CD4-positive, alpha-beta memory T cell (primary cell): ENCODE measurements at regions of chr17 and their contacts with region 1.

Region 1: GRCh38 chr17:75784473-75785015 is at the start of gene UNK:
- DNase-seq: peak; percentile 97 to 98 (median 98)
- H3K4me3 ChIP-seq: peak within 1 kb of the TSS; percentile 66 to 83
- H3K4me3 Mint-ChIP-seq: peak within 1 kb of the TSS; percentile 88 to 97 (median 94)
- H3K27ac ChIP-seq: peak within 1 kb of the TSS; percentile 100
- H3K27ac Mint-ChIP-seq: peak within 1 kb of the TSS; percentile 95 to 100 (median 99)
- H3K4me1 ChIP-seq: peaks cover 51% of the 10 kb centered on the region
- H3K4me1 Mint-ChIP-seq: peaks cover 26 to 53% (median 42%) of the 10 kb centered on the region in 4 donors
- H3K27me3 ChIP-seq: no peaks in the 10 kb centered on the region
- H3K27me3 Mint-ChIP-seq: peaks cover under 1 to 2% of the 10 kb centered on the region in 2 donors
- total RNA-seq, gene UNK: 45.8 to 48.1 TPM

Region 2: GRCh38 chr17:75795820-75796607 is 11.5 kb after region 1 on chr17:
- CTCF ChIA-PET with region 1: interaction called, 8 read pairs
- POLR2A ChIA-PET with region 1: interaction called, 16 read pairs
- intact Hi-C with region 1: no loop called
- DNase-seq: no peak
- H3K4me3 ChIP-seq: no peak overlapping the region
- H3K4me3 Mint-ChIP-seq: no peak overlapping the region
- H3K27ac ChIP-seq: no peak overlapping the region
- H3K27ac Mint-ChIP-seq: peak overlapping the region in 2 of 7 donors; percentile 10 to 80
- H3K4me1 ChIP-seq: peaks cover 10% of the 10 kb centered on the region
- H3K4me1 Mint-ChIP-seq: peaks cover 9 to 22% (median 19%) of the 10 kb centered on the region in 4 donors
- H3K27me3 ChIP-seq: no peaks in the 10 kb centered on the region
- H3K27me3 Mint-ChIP-seq: no peaks in the 10 kb centered on the region

Region 3: DNA sequence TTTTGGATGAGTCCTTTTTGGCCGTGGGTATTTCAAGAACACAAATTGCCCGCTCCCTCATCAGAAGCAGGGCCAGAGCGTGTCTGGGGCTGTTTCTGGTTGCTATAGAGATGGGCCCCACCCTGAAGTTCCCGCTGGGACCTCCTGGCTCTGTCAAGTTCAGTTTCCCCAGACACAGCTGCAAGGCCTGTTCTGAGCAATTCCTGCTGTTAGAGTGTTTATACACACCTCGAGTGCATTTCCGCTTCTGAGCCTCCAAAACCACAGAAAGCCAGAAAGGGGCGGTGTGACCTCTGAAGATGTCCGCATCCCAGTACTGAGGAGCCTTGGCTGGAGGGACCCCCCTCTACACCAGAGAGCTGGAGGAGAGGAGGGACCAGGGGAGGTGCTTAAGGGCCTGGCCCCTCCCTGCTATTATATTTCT is 79.9 kb after region 1 on chr17:
- CTCF ChIA-PET with region 1: interaction called, 4 read pairs
- POLR2A ChIA-PET with region 1: interaction called, 10 read pairs
- intact Hi-C with region 1: no loop called
- DNase-seq: peak; percentile 44 to 82 (median 50)
- H3K4me3 ChIP-seq: no peak overlapping the region
- H3K4me3 Mint-ChIP-seq: peak overlapping the region in 7 of 8 donors; percentile 54 to 84 (median 67)
- H3K27ac ChIP-seq: peak overlapping the region; percentile 60
- H3K27ac Mint-ChIP-seq: peak overlapping the region; percentile 90 to 94 (median 93)
- H3K4me1 ChIP-seq: peaks cover 23% of the 10 kb centered on the region
- H3K4me1 Mint-ChIP-seq: peaks cover 15 to 34% (median 25%) of the 10 kb centered on the region in 4 donors
- H3K27me3 ChIP-seq: no peaks in the 10 kb centered on the region
- H3K27me3 Mint-ChIP-seq: no peaks in the 10 kb centered on the region

Region 4: DNA sequence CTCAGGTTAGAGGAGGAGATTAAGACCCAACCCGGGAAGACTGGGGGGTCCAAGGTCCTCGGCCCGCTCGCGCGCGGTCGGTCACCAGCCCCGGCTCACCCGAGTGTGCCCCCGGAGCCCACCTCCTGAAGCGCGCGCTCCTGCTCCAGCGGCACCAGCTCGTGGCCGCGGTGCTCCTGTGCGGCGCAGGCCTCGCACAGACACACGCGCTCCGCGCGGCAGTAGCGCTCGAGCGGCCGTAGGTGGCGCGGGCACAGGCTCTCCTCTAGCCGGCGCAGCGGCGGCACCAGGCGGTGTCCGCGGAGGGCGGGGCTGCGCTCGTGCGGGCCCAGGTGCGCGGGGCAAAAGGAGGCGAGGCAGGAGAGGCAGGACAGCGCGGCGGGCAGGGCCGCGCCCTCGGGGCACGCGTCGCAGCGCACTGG is 93.2 kb after region 1 on chr17:
- CTCF ChIA-PET with region 1: interaction called, 10 read pairs
- POLR2A ChIA-PET with region 1: interaction called, 90 read pairs
- intact Hi-C with region 1: no loop called
- DNase-seq: peak; percentile 71 to 76 (median 75)
- H3K4me3 ChIP-seq: peak overlapping the region; percentile 61 to 76
- H3K4me3 Mint-ChIP-seq: peak overlapping the region; percentile 89 to 95 (median 91)
- H3K27ac ChIP-seq: peak overlapping the region; percentile 56
- H3K27ac Mint-ChIP-seq: peak overlapping the region; percentile 88 to 97 (median 94)
- H3K4me1 ChIP-seq: peaks cover 64% of the 10 kb centered on the region
- H3K4me1 Mint-ChIP-seq: peaks cover 26 to 62% (median 45%) of the 10 kb centered on the region in 4 donors
- H3K27me3 ChIP-seq: no peaks in the 10 kb centered on the region
- H3K27me3 Mint-ChIP-seq: no peaks in the 10 kb centered on the region